HepG2 (cell line): ENCODE measurements at regions of chr14 and their contacts with region 1.

Region 1: DNA sequence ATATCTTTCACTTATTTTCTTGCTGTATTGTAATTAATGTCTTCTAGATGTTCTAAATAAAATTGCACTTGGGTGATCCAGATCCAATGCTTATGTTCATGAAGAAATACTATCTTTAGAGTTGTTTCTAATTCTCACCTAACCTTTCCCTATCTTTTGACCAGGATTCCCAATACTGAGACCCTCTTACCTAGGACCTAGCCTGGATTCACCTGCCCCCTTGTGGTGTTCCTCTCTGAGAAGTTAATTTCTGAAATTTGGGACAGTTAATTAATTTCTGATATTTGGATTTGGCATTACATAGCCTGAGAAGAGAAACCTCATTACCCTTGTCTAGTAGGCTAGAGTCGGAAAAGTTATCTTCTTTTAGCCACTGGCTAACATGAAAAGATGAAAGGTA is 29.5 kb downstream of the FOXA1 start:
- DNase-seq: peak; percentile 70
- ATAC-seq: peak; percentile 76
- H3K4me3 ChIP-seq: no peak overlapping the region
- H3K27ac ChIP-seq: no peak overlapping the region
- H3K4me1 ChIP-seq: peaks cover 20% of the 10 kb centered on the region
- H3K27me3 ChIP-seq: no peaks in the 10 kb centered on the region
- CTCF ChIP-seq: peak; percentile 88
- EP300 ChIP-seq: 0 out of 4 replicates have a peak, but pooled peaks of 1 of the 2 experiments have one; percentile 9
- POLR2A ChIP-seq: no peak
- RAD21 ChIP-seq: peak; percentile 92

Region 2: DNA sequence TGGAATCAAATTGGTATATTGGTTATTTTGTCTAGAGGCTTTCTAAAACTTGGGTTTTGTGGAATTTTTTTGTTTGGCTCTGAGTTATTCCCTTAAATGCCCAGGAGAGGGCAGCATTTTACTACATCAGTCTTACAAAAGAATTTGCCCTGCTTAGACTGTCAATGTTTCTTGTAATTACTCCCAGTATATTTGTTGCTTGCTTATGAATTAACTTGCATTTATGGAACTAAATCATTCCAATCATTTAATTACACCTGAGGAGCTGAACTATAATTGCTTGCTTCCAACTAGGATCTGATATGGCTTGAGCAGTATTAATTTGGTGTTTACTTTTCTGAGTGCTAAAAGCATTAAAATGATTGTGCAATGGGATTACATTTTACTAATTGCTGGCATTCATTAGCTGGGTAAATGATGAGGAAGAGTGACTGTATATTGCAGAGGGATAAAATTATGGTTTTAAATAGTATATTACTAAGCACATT is 319.1 kb before region 1 on chr14:
- CTCF ChIA-PET with region 1: interaction called, 77 read pairs
- POLR2A ChIA-PET with region 1: no interaction called
- in situ Hi-C with region 1: loop called (anchors 5 kb)
- intact Hi-C with region 1: loop called (anchors 1 kb)
- DNase-seq: peak; percentile 86
- ATAC-seq: peak; percentile 79
- H3K4me3 ChIP-seq: no peak overlapping the region
- H3K27ac ChIP-seq: no peak overlapping the region
- H3K4me1 ChIP-seq: peaks cover 33% of the 10 kb centered on the region
- H3K27me3 ChIP-seq: no peaks in the 10 kb centered on the region
- CTCF ChIP-seq: peak; percentile 88
- EP300 ChIP-seq: peak in 1 of 2 experiments; percentile 37; a peak in 1 of 4 replicates
- POLR2A ChIP-seq: no peak
- RAD21 ChIP-seq: peak; percentile 93

Region 3: DNA sequence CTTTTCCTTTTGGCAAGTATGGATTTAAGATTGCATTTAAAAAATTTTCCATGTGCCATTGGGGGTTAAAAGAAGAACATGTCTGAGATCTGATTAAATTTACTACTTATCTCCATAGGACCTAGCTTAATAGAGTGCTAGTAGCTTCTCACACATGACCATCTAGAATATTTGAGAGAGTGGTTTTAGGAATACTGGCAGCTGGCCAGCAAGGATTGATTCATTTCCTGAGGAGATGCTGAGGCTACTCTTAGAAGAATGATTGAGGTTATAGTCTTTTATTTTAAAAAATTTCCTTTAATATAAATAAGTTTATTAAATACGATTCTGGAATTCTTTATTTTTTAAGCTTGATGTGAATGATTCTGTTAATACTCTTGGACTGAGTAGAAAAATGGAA is 311.6 kb before region 1 on chr14:
- CTCF ChIA-PET with region 1: interaction called, 32 read pairs
- POLR2A ChIA-PET with region 1: no interaction called
- in situ Hi-C with region 1: loop called (anchors 5 kb)
- intact Hi-C with region 1: loop called (anchors 1 kb)
- DNase-seq: no peak
- ATAC-seq: no peak
- H3K4me3 ChIP-seq: no peak overlapping the region
- H3K27ac ChIP-seq: no peak overlapping the region
- H3K4me1 ChIP-seq: peaks cover 29% of the 10 kb centered on the region
- H3K27me3 ChIP-seq: no peaks in the 10 kb centered on the region
- CTCF ChIP-seq: no peak
- EP300 ChIP-seq: no peak
- POLR2A ChIP-seq: no peak
- RAD21 ChIP-seq: no peak

Region 4: DNA sequence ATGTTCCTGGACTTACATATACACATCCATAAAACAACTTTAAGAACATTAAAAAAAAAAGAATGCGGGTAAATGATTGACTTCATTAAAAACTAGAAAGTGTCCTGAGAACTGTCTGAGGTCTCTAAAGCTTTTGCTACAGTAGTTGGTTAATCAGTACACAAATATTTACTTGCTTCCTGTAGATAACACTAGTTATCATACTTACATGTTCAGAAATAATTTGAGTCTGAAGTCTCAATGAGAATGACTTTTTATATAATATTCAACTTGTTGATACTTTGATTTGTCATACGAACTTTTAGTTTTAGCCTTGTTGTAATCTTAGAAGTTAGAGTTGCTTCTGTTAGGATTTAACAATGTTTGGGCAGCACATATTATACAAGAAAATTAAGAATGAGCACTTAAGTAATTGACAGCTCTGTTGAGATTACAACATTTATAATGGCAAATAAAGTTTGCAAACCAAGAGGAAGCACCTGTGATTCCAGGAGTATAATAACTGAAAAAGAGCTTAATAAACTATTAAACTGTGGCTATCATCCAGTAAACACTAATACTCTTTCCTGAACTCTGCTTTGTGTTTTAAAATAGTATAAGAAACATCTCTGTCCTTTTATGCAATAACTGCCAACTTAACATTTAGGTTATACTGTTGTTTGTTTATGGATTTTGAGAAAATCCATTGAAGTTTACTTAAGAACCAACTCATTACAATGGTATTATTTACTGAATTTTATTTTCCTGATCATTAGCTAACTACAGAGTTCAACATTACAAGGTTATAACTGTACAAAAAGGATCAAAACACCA is 236.2 kb before region 1 on chr14:
- CTCF ChIA-PET with region 1: no interaction called
- POLR2A ChIA-PET with region 1: no interaction called
- in situ Hi-C with region 1: no loop called
- intact Hi-C with region 1: loop called (anchors 1 kb)
- DNase-seq: peak; percentile 92
- ATAC-seq: peak; percentile 98
- H3K4me3 ChIP-seq: peak overlapping the region in 2 of 3 experiments; percentile 23 to 26; a peak in 3 of 6 replicates
- H3K27ac ChIP-seq: peak overlapping the region; percentile 57
- H3K4me1 ChIP-seq: peaks cover 30% of the 10 kb centered on the region
- H3K27me3 ChIP-seq: no peaks in the 10 kb centered on the region
- CTCF ChIP-seq: no peak
- EP300 ChIP-seq: peak; percentile 41 to 91; a peak in 3 of 4 replicates
- POLR2A ChIP-seq: no peak
- RAD21 ChIP-seq: no peak

Region 5: GRCh38 chr14:37466623-37467088 is 98.9 kb before region 1 on chr14:
- CTCF ChIA-PET with region 1: no interaction called
- POLR2A ChIA-PET with region 1: no interaction called
- in situ Hi-C with region 1: no loop called
- intact Hi-C with region 1: loop called (anchors 5 kb)
- DNase-seq: peak; percentile 100
- ATAC-seq: peak; percentile 97
- H3K4me3 ChIP-seq: peak overlapping the region in 1 of 3 experiments; percentile 12; a peak in 2 of 6 replicates
- H3K27ac ChIP-seq: peak overlapping the region; percentile 81
- H3K4me1 ChIP-seq: peaks cover 46% of the 10 kb centered on the region
- H3K27me3 ChIP-seq: no peaks in the 10 kb centered on the region
- CTCF ChIP-seq: no peak
- EP300 ChIP-seq: peak; percentile 100
- POLR2A ChIP-seq: no peak
- RAD21 ChIP-seq: peak; percentile 67